ENCODE measurements at regions of chr12 and their contacts with region 1.

Region 1: GRCh38 chr12:98743347-98743953 is 98.4 kb downstream of the APAF1 start:
- DNase-seq: peak in 2 of 9 donors; percentile 6 to 42
- ATAC-seq: peak; percentile 50
- H3K4me3 ChIP-seq: no peak overlapping the region
- H3K4me3 Mint-ChIP-seq: peak overlapping the region in 1 of 10 donors; percentile 5
- H3K27ac ChIP-seq: no peak overlapping the region
- H3K27ac Mint-ChIP-seq: peak overlapping the region in 1 of 9 donors; percentile 59
- H3K4me1 ChIP-seq: peaks cover 0 to 5% of the 10 kb centered on the region in 2 donors
- H3K4me1 Mint-ChIP-seq: peaks cover 6 to 46% (median 7%) of the 10 kb centered on the region in 7 donors
- H3K27me3 ChIP-seq: no peaks in the 10 kb centered on the region
- H3K27me3 Mint-ChIP-seq: peaks cover 15 to 40% (median 27%) of the 10 kb centered on the region in 5 donors

Region 2: DNA sequence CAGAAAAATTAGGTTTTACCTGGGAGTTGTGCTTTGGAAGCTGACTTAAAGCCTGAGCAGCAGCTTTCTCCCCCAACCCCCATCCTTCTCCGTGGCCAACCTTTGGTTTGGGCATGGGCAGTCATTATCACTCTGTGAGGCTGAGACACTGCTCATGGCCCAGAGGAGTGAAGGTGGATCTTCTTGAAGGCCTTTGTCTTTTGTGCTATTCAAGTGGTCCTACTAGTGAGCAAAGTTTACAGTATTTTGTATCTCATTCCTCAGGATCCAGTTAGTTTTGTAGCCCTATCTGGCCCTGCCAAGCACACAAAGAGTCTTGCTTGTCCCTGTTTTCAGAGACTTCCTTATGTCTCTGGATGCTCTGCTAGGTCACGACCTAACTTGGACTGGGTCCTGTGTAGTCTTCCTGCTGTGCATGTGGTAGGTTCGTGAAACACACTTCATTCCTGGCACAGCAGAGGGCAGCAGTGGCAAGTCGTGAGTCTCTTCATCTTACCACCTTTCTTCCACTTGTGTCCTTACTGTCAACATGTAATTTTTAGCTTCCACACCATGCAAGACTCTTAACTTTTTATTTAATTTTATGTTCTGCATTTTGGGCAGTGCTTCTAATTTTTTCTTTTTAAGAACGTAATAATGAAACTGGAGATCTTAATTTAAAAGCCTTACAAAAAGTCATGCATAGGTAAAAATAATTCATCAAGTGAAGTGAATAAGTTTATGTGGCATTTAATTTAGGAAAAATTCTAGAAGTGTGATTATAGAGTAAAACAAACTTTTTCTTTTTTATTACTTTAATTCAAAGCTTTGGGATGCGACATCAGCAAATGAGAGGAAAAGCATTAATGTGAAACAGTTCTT is 44.6 kb before region 1 on chr12:
- CTCF ChIA-PET with region 1: no interaction called
- POLR2A ChIA-PET with region 1: no interaction called
- intact Hi-C with region 1: loop called in 1 of 2 experiments (anchors 1 kb)
- DNase-seq: peak in 5 of 9 donors; percentile 5 to 38 (median 24)
- ATAC-seq: peak; percentile 86
- H3K4me3 ChIP-seq: no peak overlapping the region
- H3K4me3 Mint-ChIP-seq: no peak overlapping the region
- H3K27ac ChIP-seq: no peak overlapping the region
- H3K27ac Mint-ChIP-seq: peak overlapping the region in 3 of 9 donors; percentile 26 to 81 (median 47)
- H3K4me1 ChIP-seq: no peaks in the 10 kb centered on the region
- H3K4me1 Mint-ChIP-seq: peaks cover 0 to 15% (median 9%) of the 10 kb centered on the region in 7 donors
- H3K27me3 ChIP-seq: no peaks in the 10 kb centered on the region
- H3K27me3 Mint-ChIP-seq: no peaks in the 10 kb centered on the region

Measured in naive thymus-derived CD4-positive, alpha-beta T cell (primary cell).